PC-3 (cell line): ENCODE measurements at regions of chr13 and their contacts with region 1.

Region 1: GRCh38 chr13:74133657-74134201 is 475 bp downstream of the KLF12 start:
- DNase-seq: peak; percentile 35
- ATAC-seq: peak; percentile 27
- H3K4me3 ChIP-seq: peak overlapping the region; percentile 96
- H3K27ac ChIP-seq: peak overlapping the region; percentile 34; the same call in 1 of the 2 replicates
- H3K4me1 ChIP-seq: peaks cover 39% of the 10 kb centered on the region
- H3K27me3 ChIP-seq: no peaks in the 10 kb centered on the region
- CTCF ChIP-seq: no peak

Region 2: DNA sequence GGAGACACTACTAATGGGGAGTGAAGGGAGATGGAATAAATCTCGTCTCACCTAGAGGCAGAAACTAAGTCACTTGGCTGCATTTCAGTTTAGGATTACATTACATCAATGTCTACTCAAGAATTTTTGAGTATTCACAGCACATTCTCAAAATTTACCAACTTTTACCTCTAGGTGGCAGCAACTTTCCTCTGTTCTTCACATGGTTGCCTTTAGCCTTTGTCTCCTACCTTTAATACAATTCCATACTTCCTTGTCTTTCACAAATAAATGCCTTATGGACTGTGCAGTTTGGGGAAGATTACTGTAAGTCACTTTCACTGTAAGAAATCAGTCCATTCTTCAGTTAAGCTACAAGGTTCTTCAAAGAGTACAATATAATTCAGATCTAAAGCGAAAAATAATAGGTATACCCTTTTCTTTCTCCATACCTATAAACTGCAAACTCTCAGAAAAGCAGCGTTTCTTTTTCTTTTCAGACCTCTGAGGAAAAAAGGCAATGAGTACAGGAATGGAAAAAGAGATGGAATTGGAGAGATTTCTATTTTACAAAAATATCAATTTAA is 378.9 kb before region 1 on chr13:
- CTCF ChIA-PET with region 1: no interaction called
- POLR2A ChIA-PET with region 1: no interaction called
- intact Hi-C with region 1: loop called (anchors 10 kb)
- DNase-seq: peak; percentile 85
- ATAC-seq: peak; percentile 79
- H3K4me3 ChIP-seq: no peak overlapping the region
- H3K27ac ChIP-seq: no peak overlapping the region
- H3K4me1 ChIP-seq: peaks cover 8% of the 10 kb centered on the region
- H3K27me3 ChIP-seq: no peaks in the 10 kb centered on the region
- CTCF ChIP-seq: peak; percentile 72

Region 3: GRCh38 chr13:73835138-73835721 is 298.5 kb before region 1 on chr13:
- CTCF ChIA-PET with region 1: no interaction called
- POLR2A ChIA-PET with region 1: no interaction called
- intact Hi-C with region 1: loop called (anchors 1 kb)
- DNase-seq: peak; percentile 67
- ATAC-seq: peak; percentile 27; the same call in 1 of the 2 replicates
- H3K4me3 ChIP-seq: no peak overlapping the region
- H3K27ac ChIP-seq: no peak overlapping the region
- H3K4me1 ChIP-seq: peaks cover 22% of the 10 kb centered on the region
- H3K27me3 ChIP-seq: no peaks in the 10 kb centered on the region
- CTCF ChIP-seq: peak; percentile 68

Region 4: DNA sequence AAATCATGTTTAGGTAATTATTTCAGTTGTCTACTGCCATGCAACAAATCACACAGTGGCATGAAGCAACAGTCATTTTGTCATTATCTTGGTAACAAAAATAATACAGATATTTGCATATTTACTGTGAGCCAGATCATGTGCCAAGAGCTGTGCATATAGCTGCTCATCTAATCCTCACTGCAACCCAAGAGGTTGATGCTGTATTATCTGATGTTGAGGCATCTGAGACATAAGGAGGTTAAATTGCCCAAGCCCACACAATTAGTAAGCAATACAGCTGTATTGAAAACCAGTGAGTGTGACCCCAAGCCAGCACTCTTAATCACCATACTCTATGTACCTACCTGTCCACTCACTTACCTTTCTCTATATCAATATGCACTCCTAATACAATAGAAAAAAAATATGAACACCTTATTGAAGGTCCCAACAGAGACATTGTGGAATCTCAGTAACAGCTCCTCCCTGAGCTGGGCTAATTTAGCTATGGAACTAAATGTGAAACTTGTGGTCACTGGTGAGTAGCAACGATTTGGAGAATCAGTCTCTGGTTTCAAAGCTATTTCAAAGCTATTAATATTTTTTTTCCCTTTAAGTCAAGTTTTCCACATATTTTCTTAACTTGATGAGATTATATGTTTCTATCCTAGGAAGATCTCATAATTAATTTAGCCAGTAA is 184.7 kb before region 1 on chr13:
- CTCF ChIA-PET with region 1: no interaction called
- POLR2A ChIA-PET with region 1: no interaction called
- intact Hi-C with region 1: loop called (anchors 2 kb)
- DNase-seq: no peak
- ATAC-seq: no peak
- H3K4me3 ChIP-seq: no peak overlapping the region
- H3K27ac ChIP-seq: no peak overlapping the region
- H3K4me1 ChIP-seq: no peaks in the 10 kb centered on the region
- H3K27me3 ChIP-seq: no peaks in the 10 kb centered on the region
- CTCF ChIP-seq: no peak

Region 5: GRCh38 chr13:74145249-74145975 is 11.7 kb after region 1 on chr13:
- CTCF ChIA-PET with region 1: no interaction called
- POLR2A ChIA-PET with region 1: no interaction called
- intact Hi-C with region 1: no loop called
- DNase-seq: no peak
- ATAC-seq: no peak
- H3K4me3 ChIP-seq: no peak overlapping the region
- H3K27ac ChIP-seq: no peak overlapping the region
- H3K4me1 ChIP-seq: no peaks in the 10 kb centered on the region
- H3K27me3 ChIP-seq: no peaks in the 10 kb centered on the region
- CTCF ChIP-seq: no peak

Region 6: DNA sequence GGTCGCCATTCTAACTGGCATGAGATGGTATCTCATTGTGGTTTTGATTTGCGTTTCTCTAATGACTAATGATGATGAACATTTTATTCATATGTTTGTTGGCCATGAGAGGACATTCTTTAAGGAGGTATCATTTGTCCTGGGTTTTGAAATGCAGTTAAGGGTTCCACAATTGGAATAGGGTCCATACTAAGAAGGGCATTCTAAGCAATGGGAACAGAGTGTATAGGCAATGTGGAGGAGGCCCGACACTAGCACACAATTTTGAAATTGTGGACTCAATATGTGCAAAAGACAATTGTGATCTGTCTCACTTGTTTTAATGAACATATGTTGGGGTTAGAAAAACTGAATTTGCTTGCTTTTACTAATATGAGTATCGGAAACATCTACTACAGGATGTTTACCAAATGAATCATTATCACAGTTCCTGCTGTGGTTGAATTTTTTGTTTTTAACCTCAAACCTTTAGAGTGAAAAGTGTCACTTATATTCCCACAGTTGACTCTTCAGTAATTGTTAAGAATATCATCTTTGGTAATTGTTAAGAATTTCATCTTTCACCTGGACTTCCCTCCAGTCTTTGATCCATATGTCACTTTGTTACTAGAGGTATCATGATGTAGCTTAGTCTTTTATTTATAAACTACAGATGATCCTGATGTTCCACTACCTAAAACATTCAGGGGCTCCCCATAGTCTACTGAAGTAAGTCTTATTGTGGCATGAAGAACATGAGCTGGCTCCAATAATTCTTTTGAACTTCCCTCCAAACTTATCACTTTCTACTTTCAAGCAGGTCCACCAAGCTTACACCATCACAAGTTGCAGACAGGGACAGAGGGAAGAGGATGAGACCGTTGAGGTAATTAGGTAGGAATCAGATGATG is 110.2 kb after region 1 on chr13:
- CTCF ChIA-PET with region 1: no interaction called
- POLR2A ChIA-PET with region 1: no interaction called
- intact Hi-C with region 1: loop called (anchors 5 kb)
- DNase-seq: peak; percentile 73
- ATAC-seq: peak; percentile 91
- H3K4me3 ChIP-seq: 0 out of 2 replicates have a peak overlapping the region, but pooled peaks have one; percentile 11
- H3K27ac ChIP-seq: peak overlapping the region; percentile 93
- H3K4me1 ChIP-seq: peaks cover 14% of the 10 kb centered on the region
- H3K27me3 ChIP-seq: no peaks in the 10 kb centered on the region
- CTCF ChIP-seq: no peak

Region 7: GRCh38 chr13:74287724-74288169 is 154.0 kb after region 1 on chr13:
- CTCF ChIA-PET with region 1: interaction called, 9 read pairs
- POLR2A ChIA-PET with region 1: no interaction called
- intact Hi-C with region 1: loop called (anchors 1 kb)
- DNase-seq: peak; percentile 40
- ATAC-seq: peak; percentile 23
- H3K4me3 ChIP-seq: no peak overlapping the region
- H3K27ac ChIP-seq: no peak overlapping the region
- H3K4me1 ChIP-seq: peaks cover 22% of the 10 kb centered on the region
- H3K27me3 ChIP-seq: no peaks in the 10 kb centered on the region
- CTCF ChIP-seq: no peak

Region 8: DNA sequence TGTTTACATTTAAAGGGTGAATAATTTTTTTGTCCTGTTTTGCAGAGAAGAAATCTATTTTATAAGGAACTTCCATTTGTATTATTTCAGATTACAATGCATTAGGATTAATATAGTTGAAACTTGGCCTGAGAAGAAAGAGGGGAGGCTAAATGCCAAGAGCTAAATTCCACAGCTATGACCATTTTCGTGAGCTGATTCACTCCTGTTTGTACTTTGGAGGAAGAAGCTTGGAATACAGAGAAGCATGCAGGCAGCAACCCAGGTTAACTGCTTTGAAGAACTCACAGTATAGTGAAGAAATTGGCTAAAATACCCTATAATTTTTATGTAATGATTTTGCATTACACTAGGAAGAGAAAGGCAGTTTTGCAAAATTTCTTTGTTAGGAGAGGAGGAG is 309.9 kb after region 1 on chr13:
- CTCF ChIA-PET with region 1: no interaction called
- POLR2A ChIA-PET with region 1: no interaction called
- intact Hi-C with region 1: loop called (anchors 5 kb)
- DNase-seq: peak; percentile 84
- ATAC-seq: peak; percentile 67
- H3K4me3 ChIP-seq: peak overlapping the region; percentile 49
- H3K27ac ChIP-seq: peak overlapping the region; percentile 99
- H3K4me1 ChIP-seq: peaks cover 40% of the 10 kb centered on the region
- H3K27me3 ChIP-seq: no peaks in the 10 kb centered on the region
- CTCF ChIP-seq: no peak